ENCODE measurements at regions of chr2 and their contacts with region 1.

Region 1: GRCh38 chr2:132547074-132547687 is 122.8 kb downstream of the LYPD1 start:
- DNase-seq: peak; percentile 15
- H3K4me3 Mint-ChIP-seq: no peak overlapping the region
- H3K27ac Mint-ChIP-seq: no peak overlapping the region
- H3K4me1 Mint-ChIP-seq: no peaks in the 10 kb centered on the region
- H3K27me3 Mint-ChIP-seq: no peaks in the 10 kb centered on the region

Region 2: DNA sequence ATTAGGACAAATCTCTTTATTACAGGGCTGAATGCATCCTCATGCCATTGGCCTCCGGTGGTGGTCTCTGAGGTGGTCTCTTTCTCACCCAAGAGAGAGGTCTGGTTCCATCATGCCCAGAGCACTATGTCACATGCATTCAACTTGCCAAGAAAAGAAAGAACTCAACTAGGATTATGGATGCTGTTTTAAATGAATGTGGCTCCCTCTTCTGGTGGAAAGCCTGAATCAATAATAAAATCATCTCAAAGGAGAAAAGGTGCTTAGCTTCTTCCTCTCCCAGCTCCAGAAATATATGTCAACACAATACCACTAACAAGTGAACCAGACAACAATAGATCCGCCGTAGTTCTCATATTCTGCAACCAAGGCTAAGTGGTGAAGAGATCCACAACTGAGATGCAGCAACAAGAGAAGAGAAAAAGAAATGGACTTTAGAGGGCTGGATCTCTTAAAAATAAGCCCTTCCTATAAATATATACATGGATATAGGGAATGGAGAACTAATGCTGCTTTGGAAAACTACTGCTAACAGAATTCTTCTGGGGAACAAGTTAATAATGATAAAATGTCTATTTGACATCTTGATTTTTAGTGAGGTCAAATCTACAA is 624.3 kb after region 1 on chr2:
- intact Hi-C with region 1: loop called (anchors 2 kb)
- DNase-seq: no peak
- H3K4me3 Mint-ChIP-seq: no peak overlapping the region
- H3K27ac Mint-ChIP-seq: no peak overlapping the region
- H3K4me1 Mint-ChIP-seq: no peaks in the 10 kb centered on the region
- H3K27me3 Mint-ChIP-seq: no peaks in the 10 kb centered on the region

Region 3: GRCh38 chr2:133844214-133844892 is 1297.2 kb after region 1 on chr2:
- intact Hi-C with region 1: loop called (anchors 10 kb)
- DNase-seq: no peak
- H3K4me3 Mint-ChIP-seq: no peak overlapping the region
- H3K27ac Mint-ChIP-seq: no peak overlapping the region
- H3K4me1 Mint-ChIP-seq: no peaks in the 10 kb centered on the region
- H3K27me3 Mint-ChIP-seq: peaks cover 3% of the 10 kb centered on the region